ENCODE measurements at regions of chr6 and their contacts with region 1.

Region 1: DNA sequence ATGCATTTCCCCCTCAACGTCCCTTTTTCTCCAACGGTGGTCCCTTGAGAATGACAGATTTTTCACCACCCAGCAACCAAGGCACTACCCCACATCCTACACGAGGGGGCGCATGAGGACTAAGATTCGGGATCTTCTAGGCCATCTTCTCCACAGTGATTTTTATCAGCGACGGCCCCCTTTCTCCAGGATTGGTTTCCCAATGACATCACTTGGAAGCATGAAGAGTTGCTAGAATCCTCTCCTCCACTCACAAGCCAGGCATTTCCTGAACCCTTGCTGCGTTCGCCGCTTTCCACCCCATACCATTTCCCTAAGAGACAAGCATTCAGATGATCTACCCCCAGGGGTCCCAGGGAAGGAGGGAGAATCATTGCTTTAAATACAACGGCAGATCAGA is 252.0 kb downstream of the HIVEP2 start:
- DNase-seq: peak; percentile 12 to 48
- ATAC-seq: peak; percentile 78 to 92; a peak in 5 of 6 replicates
- H3K4me3 ChIP-seq: no peak overlapping the region
- H3K27ac ChIP-seq: peak overlapping the region in 1 of 2 experiments; percentile 45; a peak in 2 of 6 replicates
- H3K4me1 ChIP-seq: peaks cover 10% of the 10 kb centered on the region; the same call in 2 of the 3 replicates
- CTCF ChIP-seq: peak; percentile 82
- EP300 ChIP-seq: no peak
- POLR2A ChIP-seq: no peak
- RAD21 ChIP-seq: peak; percentile 89 to 93

Region 2: DNA sequence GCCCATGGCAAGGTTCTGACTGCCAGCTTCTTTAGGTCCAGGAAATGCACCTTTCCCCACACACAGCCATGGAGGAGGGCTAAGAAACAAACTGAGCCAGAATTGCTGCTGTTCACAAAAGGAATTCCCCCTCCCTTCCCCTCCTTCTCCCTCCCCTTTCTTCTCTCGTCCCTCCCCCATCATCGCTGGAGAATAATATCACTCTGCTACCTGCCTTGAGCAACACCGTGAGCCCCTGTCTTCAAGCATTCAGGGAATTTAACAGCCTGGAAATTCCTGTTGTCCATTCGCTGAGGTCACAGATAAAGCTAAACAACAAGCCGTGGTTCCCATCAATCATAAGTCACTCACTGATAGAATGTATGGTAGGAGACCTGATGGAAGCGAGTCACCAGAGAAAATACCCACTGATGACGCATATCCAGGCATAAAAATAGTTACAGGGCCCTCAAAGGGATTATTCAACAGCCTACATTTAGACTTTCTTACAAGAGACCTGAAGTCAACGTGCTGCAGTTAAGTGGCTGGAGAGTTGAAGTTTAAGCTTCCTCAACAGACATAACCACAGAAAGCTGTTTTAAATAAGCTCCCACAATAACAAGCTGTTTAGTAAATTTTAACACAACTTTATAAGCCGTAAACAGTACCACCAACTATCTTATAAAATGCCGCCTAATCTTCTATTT is 192.4 kb after region 1 on chr6:
- CTCF ChIA-PET with region 1: interaction called, 12 read pairs
- POLR2A ChIA-PET with region 1: no interaction called
- DNase-seq: peak; percentile 41 to 95
- ATAC-seq: peak; percentile 97 to 98
- H3K4me3 ChIP-seq: peak overlapping the region; percentile 38
- H3K27ac ChIP-seq: peak overlapping the region; percentile 66 to 73; a peak in 5 of 6 replicates
- H3K4me1 ChIP-seq: peaks cover 37% of the 10 kb centered on the region
- CTCF ChIP-seq: no peak
- EP300 ChIP-seq: peak; percentile 66 to 80; a peak in 3 of 5 replicates
- POLR2A ChIP-seq: no peak
- RAD21 ChIP-seq: peak; percentile 3 to 51; a peak in 2 of 5 replicates

Measured in A549 (cell line).